Heart left ventricle (tissue), 16 donors: ENCODE measurements at regions of chr9 and their contacts with region 1.

Region 1: GRCh38 chr9:136109351-136110081 is 9.2 kb downstream of the TMEM250 start:
- DNase-seq: peak; percentile 91 to 97 (median 95)
- ATAC-seq: peak; percentile 88 to 95 (median 90)
- H3K4me3 ChIP-seq: peak overlapping the region in 11 of 12 donors; percentile 9 to 59 (median 41)
- H3K27ac ChIP-seq: peak overlapping the region in 11 of 12 donors; percentile 73 to 92 (median 81)
- H3K4me1 ChIP-seq: peaks cover 20 to 68% (median 62%) of the 10 kb centered on the region in 12 donors
- H3K27me3 ChIP-seq: no peaks in the 10 kb centered on the region
- CTCF ChIP-seq: peak in 3 of 12 donors; percentile 6 to 17 (median 10)
- POLR2A ChIP-seq: peak in 1 of 2 donors; percentile 38

Region 2: GRCh38 chr9:136011703-136012521 is 97.6 kb before region 1 on chr9:
- intact Hi-C with region 1: loop called in 1 of 10 experiments (anchors 5 kb)
- DNase-seq: peak; percentile 86 to 93 (median 92)
- ATAC-seq: peak; percentile 77 to 81 (median 78)
- H3K4me3 ChIP-seq: peak overlapping the region in 8 of 12 donors; percentile 14 to 42 (median 24)
- H3K27ac ChIP-seq: peak overlapping the region; percentile 19 to 83 (median 75)
- H3K4me1 ChIP-seq: peaks cover 8 to 38% (median 23%) of the 10 kb centered on the region in 12 donors
- H3K27me3 ChIP-seq: no peaks in the 10 kb centered on the region
- CTCF ChIP-seq: no peak
- POLR2A ChIP-seq: no peak

Region 3: GRCh38 chr9:136204838-136205706 is 95.6 kb after region 1 on chr9 and contains the start of gene LHX3:
- intact Hi-C with region 1: no loop called
- DNase-seq: peak in 2 of 5 donors; percentile 22 to 31
- ATAC-seq: peak in 2 of 4 donors; percentile 64 to 74
- H3K4me3 ChIP-seq: no peak within 1 kb of the TSS
- H3K27ac ChIP-seq: no peak within 1 kb of the TSS
- H3K4me1 ChIP-seq: peaks cover 0 to 8% (median 0%) of the 10 kb centered on the region in 12 donors
- H3K27me3 ChIP-seq: peaks cover 36 to 54% (median 48%) of the 10 kb centered on the region in 9 donors
- CTCF ChIP-seq: no peak
- POLR2A ChIP-seq: no peak
- total RNA-seq, gene LHX3: not detected